ENCODE measurements at regions of chr7 and their contacts with region 1.

Region 1: DNA sequence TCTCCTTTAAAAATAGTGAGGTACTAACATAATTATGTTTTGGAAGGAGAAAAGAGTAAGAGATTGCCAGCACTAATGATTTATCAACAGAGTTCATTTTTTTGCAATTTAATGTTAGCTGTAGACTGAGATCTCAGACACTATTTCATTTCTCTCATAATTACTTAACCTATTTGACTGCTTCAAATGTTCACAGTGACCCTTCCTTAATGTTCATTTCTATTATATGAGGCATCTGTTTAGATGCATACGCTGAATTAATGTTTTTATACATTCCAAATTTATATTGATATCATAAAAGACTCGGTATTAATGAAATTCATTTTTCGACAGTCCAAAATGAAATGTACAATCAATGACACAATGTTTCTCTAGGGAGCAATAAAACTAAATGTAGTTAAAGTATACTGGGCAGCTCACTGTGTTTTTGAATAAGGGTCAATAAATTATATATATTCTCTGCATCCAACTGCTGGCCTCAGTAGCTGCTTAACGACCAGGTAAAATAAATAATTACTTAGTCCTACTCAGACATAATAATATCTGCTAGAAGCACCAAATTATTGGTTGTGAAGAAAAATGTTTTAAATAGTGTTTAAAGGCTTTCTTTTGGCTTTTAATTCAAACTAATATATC is 373.4 kb downstream of the MAGI2 start:
- DNase-seq: no peak
- H3K4me3 ChIP-seq: no peak overlapping the region
- H3K27ac ChIP-seq: no peak overlapping the region
- H3K4me1 ChIP-seq: no peaks in the 10 kb centered on the region
- H3K27me3 ChIP-seq: no peaks in the 10 kb centered on the region
- CTCF ChIP-seq: no peak

Region 2: DNA sequence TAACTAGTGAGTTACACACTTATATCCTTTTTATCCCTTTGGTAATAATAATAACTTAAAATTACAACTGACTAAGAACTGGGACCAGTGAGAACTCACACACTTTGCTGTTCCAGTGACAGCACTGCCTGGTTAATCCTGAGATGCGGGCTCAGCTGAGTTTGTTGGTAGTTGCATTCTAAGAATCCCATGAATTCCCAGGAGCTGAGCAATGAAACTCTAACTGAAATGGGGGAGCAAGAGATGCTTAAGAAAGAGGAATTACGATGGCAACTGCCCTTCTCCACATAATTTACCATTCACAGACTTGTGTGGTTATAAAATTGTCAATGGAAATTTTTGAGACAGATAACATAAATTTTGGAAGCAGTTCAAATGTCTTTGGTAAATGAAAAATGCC is 285.9 kb before region 1 on chr7:
- CTCF ChIA-PET with region 1: no interaction called
- POLR2A ChIA-PET with region 1: no interaction called
- intact Hi-C with region 1: no loop called
- DNase-seq: no peak
- H3K4me3 ChIP-seq: no peak overlapping the region
- H3K27ac ChIP-seq: no peak overlapping the region
- H3K4me1 ChIP-seq: no peaks in the 10 kb centered on the region
- H3K27me3 ChIP-seq: no peaks in the 10 kb centered on the region
- CTCF ChIP-seq: no peak

Region 3: DNA sequence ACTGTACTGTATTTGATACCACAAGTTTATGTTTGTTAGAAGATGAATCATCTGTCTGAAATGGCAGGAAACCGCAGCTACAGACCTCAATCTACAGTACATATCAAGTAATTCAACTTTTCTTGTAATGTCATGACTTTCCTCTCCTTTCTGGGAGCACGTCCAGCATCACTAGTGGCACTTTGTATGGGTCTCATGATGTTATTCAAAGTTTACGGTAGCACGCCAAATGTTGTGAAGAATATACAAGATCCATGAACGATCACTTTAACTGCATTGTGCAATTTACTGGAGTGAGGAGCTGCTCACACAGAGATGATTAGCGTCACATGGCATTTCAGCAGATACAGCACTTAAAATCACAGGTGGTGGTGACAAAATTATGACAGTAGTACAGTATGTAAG is 796.8 kb after region 1 on chr7:
- CTCF ChIA-PET with region 1: no interaction called
- POLR2A ChIA-PET with region 1: no interaction called
- intact Hi-C with region 1: no loop called
- DNase-seq: peak; percentile 37 to 43
- H3K4me3 ChIP-seq: no peak overlapping the region
- H3K27ac ChIP-seq: no peak overlapping the region
- H3K4me1 ChIP-seq: no peaks in the 10 kb centered on the region
- H3K27me3 ChIP-seq: 0 out of 2 replicates have a peak, but pooled peaks cover 5% of the 10 kb centered on the region
- CTCF ChIP-seq: no peak

Region 4: DNA sequence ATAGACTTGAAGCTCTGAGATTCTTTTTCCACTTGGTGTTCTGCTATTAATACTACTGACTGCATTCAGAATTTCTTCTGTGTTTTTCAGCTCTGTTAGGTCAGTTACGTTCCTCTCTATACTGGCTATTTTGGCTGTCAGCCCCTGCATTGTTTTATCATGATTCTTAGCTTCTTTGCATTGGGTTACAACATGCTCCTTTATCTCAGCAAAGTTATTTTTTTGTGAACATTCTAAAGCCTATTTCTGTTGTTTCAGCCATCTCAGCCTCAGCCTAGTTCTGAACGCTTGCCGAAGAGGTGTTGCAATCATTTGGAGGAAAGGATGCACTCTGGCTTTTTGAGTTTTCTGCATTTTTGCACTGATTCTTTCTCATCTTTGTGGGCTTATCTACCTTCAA is 853.1 kb after region 1 on chr7:
- CTCF ChIA-PET with region 1: interaction called, 4 read pairs
- POLR2A ChIA-PET with region 1: interaction called, 22 read pairs
- intact Hi-C with region 1: no loop called
- DNase-seq: no peak
- H3K4me3 ChIP-seq: no peak overlapping the region
- H3K27ac ChIP-seq: no peak overlapping the region
- H3K4me1 ChIP-seq: no peaks in the 10 kb centered on the region
- H3K27me3 ChIP-seq: no peaks in the 10 kb centered on the region
- CTCF ChIP-seq: no peak